HAP-1 (cell line): ENCODE measurements at regions of chr3 and their contacts with region 1.

Region 1: DNA sequence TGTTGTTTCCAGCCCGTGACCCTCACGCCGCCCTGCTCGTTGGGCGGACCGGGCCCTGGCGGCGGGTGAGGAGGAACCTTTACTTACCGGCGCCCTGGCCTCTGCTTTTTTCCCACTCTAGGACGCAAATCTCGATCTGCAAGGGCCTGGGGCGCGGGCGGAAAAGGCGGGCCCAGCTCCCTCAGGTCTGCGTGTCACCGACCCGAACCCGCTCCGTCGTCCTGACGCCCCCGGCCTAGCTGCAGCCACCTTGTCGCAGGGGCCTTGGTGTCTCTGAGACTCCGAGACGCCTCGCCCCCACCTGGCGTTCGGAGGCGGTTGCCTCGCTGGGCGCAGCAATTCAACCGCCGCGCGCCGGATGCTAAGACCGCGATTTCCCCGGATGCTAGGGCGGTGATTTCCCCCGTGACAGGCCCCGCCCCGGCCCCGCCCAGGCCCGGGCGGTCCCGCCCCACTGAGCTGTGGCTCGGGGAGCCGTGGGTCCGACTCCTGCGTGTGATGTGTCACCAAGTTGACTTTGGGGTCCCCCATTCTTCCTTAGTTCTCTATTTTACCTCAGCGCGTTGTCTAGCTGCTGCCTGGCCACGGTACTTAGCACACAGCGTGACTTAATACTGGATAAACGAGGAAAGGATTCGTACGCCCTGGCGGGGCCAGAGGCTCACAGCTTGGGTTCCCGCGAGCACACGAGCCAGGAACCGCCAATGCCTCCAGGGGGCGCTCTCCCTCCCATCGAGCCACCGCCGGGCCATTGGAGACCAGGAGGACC is at the start of gene RPL39L:
- DNase-seq: peak; percentile 79 to 94
- H3K4me3 ChIP-seq: peak within 1 kb of the TSS; percentile 51
- H3K4me1 ChIP-seq: peaks cover 8% of the 10 kb centered on the region
- H3K27me3 ChIP-seq: 0 out of 2 replicates have a peak, but pooled peaks cover 2% of the 10 kb centered on the region

Region 2: DNA sequence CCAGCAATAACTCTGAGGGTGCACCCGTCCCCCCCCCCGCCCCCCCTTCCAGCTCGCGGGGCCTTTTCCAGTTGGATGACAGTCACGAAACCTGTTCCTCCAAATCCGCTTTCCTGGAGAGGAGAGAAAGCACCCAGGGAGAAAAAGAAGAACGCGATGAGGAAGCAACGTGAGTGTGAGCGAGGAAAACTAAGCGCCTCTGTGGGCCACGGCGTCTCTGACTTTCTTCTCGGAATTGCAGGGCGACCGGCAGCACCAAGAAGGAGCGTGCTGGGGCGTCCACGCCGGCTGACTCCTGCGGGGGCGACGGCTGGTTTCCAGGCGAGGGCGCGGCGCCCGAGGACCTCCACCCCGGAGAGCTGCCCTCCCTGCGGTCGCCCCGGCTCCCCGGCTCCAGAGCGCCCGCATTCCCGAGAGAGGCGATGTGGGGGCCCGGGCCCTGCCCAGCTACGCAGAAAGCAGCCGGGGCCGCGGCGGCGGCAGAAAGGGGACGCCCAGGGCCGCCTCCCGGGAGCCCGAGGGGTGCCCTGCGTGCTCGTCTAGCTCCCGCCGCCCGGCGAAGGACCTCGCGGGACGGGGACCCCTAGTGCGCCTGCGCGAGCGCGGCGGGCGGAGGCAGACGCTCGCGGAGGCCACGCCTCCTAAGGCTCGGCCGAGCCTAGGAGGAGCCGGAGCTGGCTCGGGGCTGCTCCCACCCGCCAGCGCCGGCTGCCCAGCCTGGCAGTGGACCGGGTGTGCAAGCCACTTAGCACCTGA is 312.2 kb before region 1 on chr3:
- in situ Hi-C with region 1: loop called (anchors 25 kb)
- DNase-seq: peak; percentile 84 to 88
- H3K4me3 ChIP-seq: peak overlapping the region; percentile 36
- H3K4me1 ChIP-seq: peaks cover 25% of the 10 kb centered on the region
- H3K27me3 ChIP-seq: 0 out of 2 replicates have a peak, but pooled peaks cover under 1% of the 10 kb centered on the region

Region 3: GRCh38 chr3:187015903-187016638 is 123.2 kb before region 1 on chr3:
- in situ Hi-C with region 1: no loop called
- DNase-seq: no peak
- H3K4me3 ChIP-seq: no peak overlapping the region
- H3K4me1 ChIP-seq: no peaks in the 10 kb centered on the region
- H3K27me3 ChIP-seq: no peaks in the 10 kb centered on the region

Region 4: GRCh38 chr3:187295316-187296034 is 156.2 kb after region 1 on chr3:
- in situ Hi-C with region 1: no loop called
- DNase-seq: peak; percentile 18 to 19
- H3K4me3 ChIP-seq: no peak overlapping the region
- H3K4me1 ChIP-seq: peaks cover 3% of the 10 kb centered on the region; the same call in 1 of the 2 replicates
- H3K27me3 ChIP-seq: no peaks in the 10 kb centered on the region